ENCODE measurements at regions of chr20 and their contacts with region 1.

Region 1: GRCh38 chr20:5191829-5192569 is 65.2 kb downstream of the CDS2 start:
- DNase-seq: peak; percentile 57
- H3K4me3 ChIP-seq: no peak overlapping the region
- H3K27ac ChIP-seq: no peak overlapping the region
- H3K27me3 ChIP-seq: no peaks in the 10 kb centered on the region
- CTCF ChIP-seq: peak; percentile 76

Region 2: GRCh38 chr20:5119435-5120188 is 72.4 kb before region 1 on chr20 and contains the start of gene PCNA:
- CTCF ChIA-PET with region 1: interaction called, 284 read pairs
- POLR2A ChIA-PET with region 1: interaction called, 3 read pairs
- DNase-seq: peak; percentile 93
- H3K4me3 ChIP-seq: peak within 1 kb of the TSS; percentile 98
- H3K27ac ChIP-seq: peak within 1 kb of the TSS; percentile 90
- H3K27me3 ChIP-seq: no peaks in the 10 kb centered on the region
- CTCF ChIP-seq: no peak
- polyA plus RNA-seq, gene PCNA: 118 and 134 TPM in 2 replicates

Region 3: DNA sequence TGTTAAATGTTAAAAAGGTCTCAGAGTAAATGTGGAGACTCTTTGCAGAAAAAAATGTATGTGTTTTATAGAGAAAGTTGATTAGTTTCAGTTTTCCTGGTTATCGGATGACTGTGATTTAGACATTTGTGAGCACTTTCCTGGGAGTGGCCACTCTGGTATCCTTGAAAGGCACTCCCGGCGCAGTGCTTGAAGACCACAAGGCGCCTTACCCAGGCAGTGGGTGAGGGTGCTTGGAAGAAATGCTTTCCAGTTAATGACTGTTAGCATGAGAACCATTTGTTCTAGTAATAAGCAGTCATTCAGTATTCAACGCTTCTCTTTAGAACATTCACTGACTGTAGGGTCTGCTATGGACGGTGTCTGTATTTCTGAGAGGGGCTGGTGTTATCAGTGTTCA is 58.0 kb before region 1 on chr20:
- CTCF ChIA-PET with region 1: interaction called, 284 read pairs
- POLR2A ChIA-PET with region 1: interaction called, 4 read pairs
- DNase-seq: no peak
- H3K4me3 ChIP-seq: no peak overlapping the region
- H3K27ac ChIP-seq: no peak overlapping the region
- H3K27me3 ChIP-seq: no peaks in the 10 kb centered on the region
- CTCF ChIP-seq: no peak

Region 4: GRCh38 chr20:5168651-5169396 is 23.2 kb before region 1 on chr20:
- CTCF ChIA-PET with region 1: interaction called, 15 read pairs
- POLR2A ChIA-PET with region 1: no interaction called
- DNase-seq: no peak
- H3K4me3 ChIP-seq: no peak overlapping the region
- H3K27ac ChIP-seq: peak overlapping the region; percentile 52
- H3K27me3 ChIP-seq: no peaks in the 10 kb centered on the region
- CTCF ChIP-seq: no peak

Region 5: GRCh38 chr20:5205348-5206210 is 13.6 kb after region 1 on chr20:
- CTCF ChIA-PET with region 1: interaction called, 28 read pairs
- POLR2A ChIA-PET with region 1: no interaction called
- DNase-seq: peak; percentile 47
- H3K4me3 ChIP-seq: no peak overlapping the region
- H3K27ac ChIP-seq: no peak overlapping the region
- H3K27me3 ChIP-seq: no peaks in the 10 kb centered on the region
- CTCF ChIP-seq: peak; percentile 97

Measured in AG04450 (cell line).